ENCODE measurements at regions of chrX and their contacts with region 1.

Region 1: DNA sequence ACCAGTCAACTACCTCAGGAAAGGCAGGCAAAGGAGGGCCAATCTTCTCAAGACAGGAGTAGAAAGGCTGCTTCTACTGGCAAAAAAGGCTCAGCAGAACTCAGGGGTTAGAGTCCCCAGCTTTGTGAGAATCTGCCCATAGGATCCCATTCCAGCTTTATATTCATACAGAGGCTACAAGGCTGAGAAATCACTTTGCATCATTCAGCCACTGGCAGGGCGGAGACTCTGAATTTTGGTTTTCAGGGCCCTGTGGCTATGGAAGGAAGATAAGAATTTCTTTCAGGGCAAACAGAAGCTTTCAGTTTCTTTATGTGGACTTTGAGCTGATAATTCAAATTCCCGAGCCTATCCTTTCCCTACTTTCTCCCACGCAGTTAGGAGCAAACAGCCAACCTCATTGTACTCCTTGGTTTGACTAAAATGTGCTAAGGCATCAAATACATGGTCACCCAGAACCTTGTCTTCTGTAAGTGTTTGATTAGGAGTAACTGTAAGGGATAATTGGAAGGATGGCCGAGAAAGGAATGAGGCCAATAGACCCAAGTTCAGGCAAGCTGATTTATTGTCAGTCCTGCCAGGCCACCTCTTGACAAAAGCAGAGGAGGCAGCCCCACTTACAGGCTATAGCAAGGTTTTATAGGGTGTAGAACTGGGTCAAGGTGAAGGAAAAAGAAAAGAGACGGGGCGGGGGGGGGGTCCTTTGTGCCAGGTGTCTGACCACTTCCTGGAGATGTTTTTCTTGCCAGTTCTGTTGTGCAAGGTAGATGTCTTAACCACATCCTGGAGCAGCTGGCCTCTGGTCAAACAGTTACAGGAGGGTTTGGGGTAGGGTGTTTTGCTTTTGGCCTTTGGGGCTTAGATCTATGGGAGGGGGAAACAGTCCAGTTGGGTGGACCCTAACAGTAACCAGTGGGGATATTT is 165.3 kb upstream of the PPP1R2C start:
- DNase-seq: peak; percentile 92
- H3K4me3 ChIP-seq: peak overlapping the region; percentile 35
- H3K27ac ChIP-seq: peak overlapping the region; percentile 100
- H3K4me1 ChIP-seq: peaks cover 42% of the 10 kb centered on the region
- CTCF ChIP-seq: peak; percentile 43; the same call in 1 of the 2 replicates

Region 2: DNA sequence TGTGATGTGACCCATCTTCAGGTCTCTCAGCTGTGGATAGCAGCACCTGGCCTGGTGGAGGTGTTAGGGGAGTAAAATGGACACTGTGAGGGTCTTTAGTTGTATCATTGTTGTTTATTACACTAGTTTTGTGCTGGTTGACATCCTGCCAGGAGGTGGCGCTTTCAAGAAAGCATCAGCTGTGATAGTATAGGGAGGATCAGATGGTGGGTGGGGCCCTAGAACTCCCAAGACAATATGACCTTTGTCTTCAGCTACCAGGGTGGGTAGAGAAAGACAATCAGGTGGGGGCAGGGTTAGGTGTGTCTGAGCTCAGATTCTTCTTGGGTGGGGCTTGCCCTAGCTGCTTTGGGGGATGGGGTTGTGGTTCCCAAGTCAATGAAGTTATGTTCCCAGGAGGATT is 328.2 kb before region 1 on chrX:
- CTCF ChIA-PET with region 1: no interaction called
- POLR2A ChIA-PET with region 1: no interaction called
- intact Hi-C with region 1: loop called (anchors 2 kb)
- DNase-seq: peak; percentile 32
- H3K4me3 ChIP-seq: no peak overlapping the region
- H3K27ac ChIP-seq: no peak overlapping the region
- H3K4me1 ChIP-seq: peaks cover 11% of the 10 kb centered on the region
- CTCF ChIP-seq: peak; percentile 63

Region 3: DNA sequence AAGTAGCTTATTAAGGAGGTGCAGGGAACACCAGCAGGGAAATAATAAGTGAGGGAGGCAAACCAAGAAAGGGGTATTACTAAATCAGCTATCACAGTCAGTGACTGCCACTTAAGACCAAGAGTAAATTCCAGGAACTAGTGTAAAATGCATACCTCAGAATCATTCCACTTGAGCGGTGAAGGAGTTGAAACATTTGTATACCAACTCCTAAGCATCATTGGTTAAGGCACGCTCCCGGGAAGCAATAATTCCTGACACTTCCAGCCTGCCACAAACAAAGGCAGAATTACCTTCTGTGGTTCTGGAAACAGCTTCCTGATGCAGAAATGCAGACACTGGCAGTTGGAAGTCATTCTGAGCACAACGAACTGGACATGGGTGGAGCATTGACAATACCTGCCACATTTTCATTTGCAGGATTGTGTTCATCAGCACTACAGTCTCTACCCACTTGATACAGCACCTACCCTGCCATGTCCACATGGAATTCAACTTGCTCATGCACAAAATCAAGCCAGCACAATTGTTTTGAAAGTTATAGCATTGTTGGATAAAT is 247.4 kb before region 1 on chrX:
- CTCF ChIA-PET with region 1: no interaction called
- POLR2A ChIA-PET with region 1: interaction called, 13 read pairs
- intact Hi-C with region 1: no loop called
- DNase-seq: no peak
- H3K4me3 ChIP-seq: no peak overlapping the region
- H3K27ac ChIP-seq: peak overlapping the region; percentile 62
- H3K4me1 ChIP-seq: peaks cover 17% of the 10 kb centered on the region
- CTCF ChIP-seq: no peak

Region 4: DNA sequence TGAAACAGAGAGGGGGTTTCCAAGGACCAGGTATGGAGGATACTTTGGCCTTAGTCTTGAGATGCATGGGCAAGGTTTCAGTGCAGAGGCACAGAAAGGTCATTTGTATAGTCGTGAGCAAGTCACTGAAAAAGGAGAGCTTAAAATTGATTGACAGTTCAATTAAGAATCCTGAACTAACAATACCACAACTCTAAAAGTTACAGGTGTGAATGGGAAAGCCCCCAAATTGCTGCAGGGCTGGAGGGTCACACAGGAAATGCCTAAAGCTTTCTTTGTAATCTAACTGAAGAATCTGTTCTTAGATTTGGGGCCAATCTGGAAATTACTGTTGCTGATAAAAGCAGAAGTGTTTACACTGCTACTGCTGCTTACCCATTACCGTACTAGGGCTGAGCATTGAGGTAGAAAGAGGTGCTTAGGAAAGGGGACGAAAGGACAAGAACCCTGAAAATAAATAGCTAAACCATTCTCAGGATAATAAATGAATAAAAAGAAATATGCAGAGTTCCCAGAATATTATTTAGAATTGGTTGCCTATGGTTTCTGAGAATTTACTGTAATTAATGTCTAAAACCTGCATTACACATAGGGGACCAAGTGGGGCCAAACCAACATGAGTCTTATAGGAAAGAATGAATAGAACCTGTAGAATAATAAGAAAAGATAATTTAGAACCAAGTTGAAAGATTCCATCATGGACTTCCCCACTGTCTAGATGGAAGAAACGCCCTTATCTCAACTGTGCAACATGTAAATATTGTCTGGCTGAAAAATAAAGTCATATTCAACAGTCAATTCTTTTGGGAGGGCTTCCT is 73.4 kb before region 1 on chrX:
- CTCF ChIA-PET with region 1: no interaction called
- POLR2A ChIA-PET with region 1: interaction called, 5 read pairs
- intact Hi-C with region 1: loop called (anchors 2 kb)
- DNase-seq: peak; percentile 81
- H3K4me3 ChIP-seq: peak overlapping the region; percentile 20
- H3K27ac ChIP-seq: peak overlapping the region; percentile 97
- H3K4me1 ChIP-seq: peaks cover 40% of the 10 kb centered on the region
- CTCF ChIP-seq: no peak

Region 5: GRCh38 chrX:43557792-43558191 is 614.5 kb after region 1 on chrX:
- CTCF ChIA-PET with region 1: no interaction called
- POLR2A ChIA-PET with region 1: no interaction called
- intact Hi-C with region 1: loop called (anchors 5 kb)
- DNase-seq: peak; percentile 72
- H3K4me3 ChIP-seq: no peak overlapping the region
- H3K27ac ChIP-seq: no peak overlapping the region
- H3K4me1 ChIP-seq: no peaks in the 10 kb centered on the region
- CTCF ChIP-seq: peak; percentile 80

Region 6: DNA sequence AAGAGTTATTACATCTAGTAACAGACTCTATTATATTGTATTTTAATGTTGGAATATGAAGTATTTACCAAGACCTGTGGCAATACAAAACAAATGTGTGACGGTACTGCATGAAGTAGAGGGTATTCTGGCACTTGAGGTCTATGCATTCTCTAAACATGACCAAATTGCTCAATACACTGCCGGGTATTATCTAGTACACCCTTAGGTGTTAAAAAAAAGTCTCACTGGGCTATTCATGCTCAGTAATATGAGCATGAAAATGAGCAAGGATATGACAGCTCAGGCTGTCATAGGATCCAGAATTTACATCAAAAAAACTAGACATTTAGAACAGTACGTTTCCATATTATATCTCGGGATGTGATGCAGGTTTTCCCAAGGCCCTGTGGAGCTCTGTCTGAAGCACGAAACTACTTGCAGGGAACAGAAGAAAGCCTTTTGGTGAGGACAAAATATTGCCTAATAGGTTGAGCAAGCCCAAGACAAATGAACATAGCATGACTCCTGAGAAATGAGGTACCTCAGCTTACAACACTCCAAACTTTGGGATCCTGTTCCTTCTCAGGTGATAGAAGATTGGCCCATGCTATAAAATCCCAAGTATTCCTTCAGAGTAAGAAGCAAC is 638.7 kb after region 1 on chrX:
- CTCF ChIA-PET with region 1: no interaction called
- POLR2A ChIA-PET with region 1: no interaction called
- intact Hi-C with region 1: no loop called
- DNase-seq: no peak
- H3K4me3 ChIP-seq: no peak overlapping the region
- H3K27ac ChIP-seq: no peak overlapping the region
- H3K4me1 ChIP-seq: no peaks in the 10 kb centered on the region
- CTCF ChIP-seq: no peak